GM12878 (cell line): ENCODE measurements at regions of chr4 and their contacts with region 1.

Region 1: DNA sequence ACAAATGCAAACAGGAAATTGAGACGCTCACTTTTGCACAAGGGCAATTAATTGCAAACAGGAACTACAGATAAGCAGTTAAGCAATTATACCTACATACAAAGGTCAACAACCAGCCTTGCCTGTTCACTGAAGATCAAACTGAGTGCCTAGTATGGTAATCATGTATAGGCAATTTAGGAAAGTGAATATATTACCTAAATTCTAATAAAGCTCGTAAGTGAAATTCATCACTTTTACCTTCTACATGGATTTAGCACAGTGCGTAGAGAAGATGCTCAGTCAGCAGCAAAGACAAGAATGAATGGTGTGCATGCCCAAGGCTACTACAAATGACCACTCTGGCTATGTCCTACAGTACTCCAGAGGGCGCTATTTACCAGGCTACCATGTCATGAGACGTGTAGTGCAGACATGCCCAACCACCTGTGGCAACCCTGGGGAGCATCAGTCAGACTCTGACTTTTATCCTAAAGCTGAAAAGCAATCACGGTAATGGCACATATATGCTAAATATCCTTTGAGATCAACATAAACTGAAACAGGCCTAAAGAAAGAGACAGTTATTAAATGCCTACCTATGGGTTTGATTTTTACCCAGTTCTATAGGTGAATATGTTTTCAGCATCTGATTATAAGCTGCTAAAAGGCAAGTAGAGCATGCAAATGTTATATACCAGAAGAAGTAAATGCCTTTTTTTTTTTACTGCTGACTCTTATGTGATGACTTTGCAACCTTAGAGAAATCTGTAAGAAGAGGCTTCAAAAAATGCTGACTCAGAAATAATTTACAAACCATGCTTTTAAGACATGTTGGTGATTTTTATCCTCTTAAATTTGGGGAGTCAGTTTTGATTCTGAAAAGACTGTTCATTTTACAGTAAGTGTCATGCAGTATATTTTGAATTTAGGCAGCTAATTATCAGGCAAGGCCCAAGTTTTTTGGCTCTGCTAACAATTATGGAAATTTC is 178.0 kb downstream of the PPP3CA start:
- DNase-seq: peak; percentile 47
- ATAC-seq: peak; percentile 100
- H3K4me3 ChIP-seq: no peak overlapping the region
- H3K27ac ChIP-seq: no peak overlapping the region
- H3K4me1 ChIP-seq: no peaks in the 10 kb centered on the region
- H3K27me3 ChIP-seq: no peaks in the 10 kb centered on the region
- CTCF ChIP-seq: peak; percentile 79 to 82 (median 81)
- EP300 ChIP-seq: no peak
- POLR2A ChIP-seq: no peak
- RAD21 ChIP-seq: peak; percentile 96

Region 2: DNA sequence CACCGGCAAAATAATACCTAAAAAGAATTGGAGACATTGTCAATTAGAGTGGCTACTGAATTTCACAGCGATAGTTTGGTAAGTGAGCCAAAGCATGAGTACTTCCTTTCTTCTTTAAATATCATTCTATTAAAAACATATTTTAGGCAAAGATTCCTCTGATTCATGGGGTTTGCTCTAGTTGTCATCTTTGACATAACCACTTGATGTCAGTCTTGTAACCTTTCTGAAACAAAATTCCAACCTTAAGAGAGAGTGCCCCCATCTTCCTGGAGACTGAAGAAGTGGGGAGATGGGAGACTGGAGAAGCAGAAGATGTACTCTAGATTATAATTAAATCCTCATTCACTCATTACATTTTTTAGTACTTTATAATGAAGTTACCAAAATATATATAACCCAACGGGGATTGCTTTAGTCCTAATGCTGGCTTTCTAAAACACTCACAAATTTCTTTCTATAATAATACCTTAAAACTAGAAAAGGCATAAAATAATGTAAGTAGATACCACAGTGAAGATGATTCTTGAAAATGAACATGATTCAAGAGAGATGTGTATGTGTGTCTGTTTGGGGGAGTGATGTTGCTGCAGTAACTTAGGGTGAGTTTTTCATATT is 747.9 kb before region 1 on chr4:
- CTCF ChIA-PET with region 1: no interaction called
- POLR2A ChIA-PET with region 1: no interaction called
- RAD21 ChIA-PET with region 1: no interaction called
- SMC1A ChIA-PET with region 1: no interaction called
- in situ Hi-C with region 1: no loop called
- intact Hi-C with region 1: loop called (anchors 10 kb)
- DNase-seq: no peak
- ATAC-seq: no peak
- H3K4me3 ChIP-seq: no peak overlapping the region
- H3K27ac ChIP-seq: no peak overlapping the region
- H3K4me1 ChIP-seq: no peaks in the 10 kb centered on the region
- H3K27me3 ChIP-seq: no peaks in the 10 kb centered on the region
- CTCF ChIP-seq: peak; percentile 19 to 45 (median 29); a peak in 4 of 6 replicates
- EP300 ChIP-seq: no peak
- POLR2A ChIP-seq: no peak
- RAD21 ChIP-seq: peak; percentile 70

Region 3: DNA sequence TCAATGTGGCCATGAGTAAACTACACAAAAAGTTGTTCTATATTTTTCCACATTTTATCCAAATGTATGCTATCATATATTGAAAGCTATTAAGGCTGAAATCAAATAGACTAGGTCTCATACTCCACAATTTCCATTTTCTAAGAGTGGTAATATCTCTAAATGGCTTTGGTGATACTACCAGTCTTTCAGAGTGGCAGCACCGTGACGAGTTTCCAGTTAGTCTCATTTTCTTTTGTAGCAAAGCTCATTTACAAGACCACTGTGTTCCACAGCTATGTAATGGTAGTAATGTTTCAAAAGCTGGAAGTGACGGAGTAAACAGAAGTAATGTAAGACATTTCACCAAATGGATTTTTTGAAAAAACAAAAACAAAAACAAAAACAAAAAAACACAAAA is 50.2 kb before region 1 on chr4:
- CTCF ChIA-PET with region 1: no interaction called
- POLR2A ChIA-PET with region 1: no interaction called
- RAD21 ChIA-PET with region 1: no interaction called
- SMC1A ChIA-PET with region 1: no interaction called
- in situ Hi-C with region 1: no loop called
- intact Hi-C with region 1: no loop called
- DNase-seq: no peak
- ATAC-seq: no peak
- H3K4me3 ChIP-seq: no peak overlapping the region
- H3K27ac ChIP-seq: no peak overlapping the region
- H3K4me1 ChIP-seq: no peaks in the 10 kb centered on the region
- H3K27me3 ChIP-seq: no peaks in the 10 kb centered on the region
- CTCF ChIP-seq: no peak
- EP300 ChIP-seq: no peak
- POLR2A ChIP-seq: no peak
- RAD21 ChIP-seq: no peak

Region 4: GRCh38 chr4:101155368-101155767 is 14.0 kb before region 1 on chr4:
- CTCF ChIA-PET with region 1: interaction called, 12 read pairs
- POLR2A ChIA-PET with region 1: no interaction called
- RAD21 ChIA-PET with region 1: interaction called, 4 read pairs
- SMC1A ChIA-PET with region 1: interaction called, 3 read pairs
- in situ Hi-C with region 1: no loop called
- intact Hi-C with region 1: no loop called
- DNase-seq: no peak
- ATAC-seq: no peak
- H3K4me3 ChIP-seq: no peak overlapping the region
- H3K27ac ChIP-seq: no peak overlapping the region
- H3K4me1 ChIP-seq: peaks cover 13% of the 10 kb centered on the region
- H3K27me3 ChIP-seq: no peaks in the 10 kb centered on the region
- CTCF ChIP-seq: no peak
- EP300 ChIP-seq: no peak
- POLR2A ChIP-seq: no peak
- RAD21 ChIP-seq: no peak

Region 5: DNA sequence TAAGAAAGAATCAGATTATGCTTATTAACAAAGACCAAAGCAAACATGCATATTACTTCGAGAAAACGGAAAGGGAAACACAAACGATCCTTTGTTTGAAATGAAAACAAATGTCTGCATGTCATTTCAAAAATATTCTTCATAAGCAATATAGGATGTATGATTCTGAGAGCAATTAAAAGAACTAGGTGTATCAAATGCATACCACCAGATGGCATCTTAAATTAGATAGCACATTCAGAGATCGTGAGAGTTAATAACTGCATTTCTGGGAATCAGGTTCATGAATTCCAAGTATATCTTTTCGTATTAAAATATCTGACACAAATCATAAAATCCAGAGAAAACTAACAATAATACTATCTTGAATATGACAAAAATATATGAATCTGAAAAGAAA is 18.5 kb after region 1 on chr4:
- CTCF ChIA-PET with region 1: interaction called, 5 read pairs
- POLR2A ChIA-PET with region 1: no interaction called
- RAD21 ChIA-PET with region 1: interaction called, 4 read pairs
- SMC1A ChIA-PET with region 1: interaction called, 12 read pairs
- in situ Hi-C with region 1: no loop called
- intact Hi-C with region 1: no loop called
- DNase-seq: no peak
- ATAC-seq: no peak
- H3K4me3 ChIP-seq: no peak overlapping the region
- H3K27ac ChIP-seq: no peak overlapping the region
- H3K4me1 ChIP-seq: no peaks in the 10 kb centered on the region
- H3K27me3 ChIP-seq: no peaks in the 10 kb centered on the region
- CTCF ChIP-seq: peak in 1 of 3 experiments; percentile 4; a peak in 1 of 6 replicates
- EP300 ChIP-seq: no peak
- POLR2A ChIP-seq: no peak
- RAD21 ChIP-seq: 0 out of 2 replicates have a peak, but pooled peaks have one; percentile 5

Region 6: DNA sequence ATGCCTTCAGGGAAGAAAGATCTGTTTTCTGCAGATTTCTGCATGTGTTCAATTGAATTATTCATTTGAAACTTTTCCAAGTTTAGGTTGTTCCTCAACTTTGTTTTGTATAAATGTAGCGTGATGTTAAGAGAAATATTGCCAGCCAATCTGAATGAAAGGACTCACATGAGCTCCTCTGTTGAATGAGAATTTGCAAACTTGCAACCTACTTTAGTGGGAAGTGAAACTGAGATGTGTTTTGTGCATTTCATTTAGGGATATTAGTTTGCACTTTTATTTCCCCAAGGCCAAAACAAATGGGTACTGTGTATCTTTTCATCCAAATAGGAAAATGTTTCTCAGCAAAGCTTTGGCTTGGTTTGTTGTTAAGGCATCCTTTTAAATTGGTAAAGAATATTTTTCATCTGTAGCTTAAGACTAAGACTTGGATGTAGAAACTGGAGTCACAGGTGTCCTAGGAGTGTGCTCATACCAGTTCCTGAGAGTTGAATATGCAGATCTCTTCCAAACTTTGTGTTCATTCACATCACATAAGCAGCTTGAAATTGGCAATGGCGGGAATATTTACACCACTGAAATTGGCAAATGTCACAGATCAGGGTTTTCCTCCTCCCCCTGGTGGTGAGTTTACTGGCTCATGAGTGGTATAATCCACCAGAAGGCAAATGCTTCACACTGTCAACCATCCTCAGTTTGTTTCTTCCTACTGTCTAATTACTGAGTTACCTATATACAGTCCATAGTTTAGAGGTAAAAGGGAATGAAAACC is 427.6 kb after region 1 on chr4:
- CTCF ChIA-PET with region 1: interaction called, 17 read pairs
- POLR2A ChIA-PET with region 1: no interaction called
- RAD21 ChIA-PET with region 1: interaction called, 4 read pairs
- SMC1A ChIA-PET with region 1: interaction called, 13 read pairs
- in situ Hi-C with region 1: no loop called
- intact Hi-C with region 1: loop called (anchors 1 kb)
- DNase-seq: peak; percentile 5
- ATAC-seq: peak; percentile 67
- H3K4me3 ChIP-seq: no peak overlapping the region
- H3K27ac ChIP-seq: no peak overlapping the region
- H3K4me1 ChIP-seq: no peaks in the 10 kb centered on the region
- H3K27me3 ChIP-seq: no peaks in the 10 kb centered on the region
- CTCF ChIP-seq: peak; percentile 41 to 43 (median 43); a peak in 5 of 6 replicates
- EP300 ChIP-seq: no peak
- POLR2A ChIP-seq: no peak
- RAD21 ChIP-seq: peak; percentile 30

Region 7: GRCh38 chr4:101730291-101731117 is 561.2 kb after region 1 on chr4:
- CTCF ChIA-PET with region 1: interaction called, 117 read pairs
- POLR2A ChIA-PET with region 1: no interaction called
- RAD21 ChIA-PET with region 1: interaction called, 52 read pairs
- SMC1A ChIA-PET with region 1: interaction called, 55 read pairs
- in situ Hi-C with region 1: loop called (anchors 5 kb)
- intact Hi-C with region 1: loop called (anchors 1 kb)
- DNase-seq: peak; percentile 8
- ATAC-seq: peak; percentile 95
- H3K4me3 ChIP-seq: no peak overlapping the region
- H3K27ac ChIP-seq: no peak overlapping the region
- H3K4me1 ChIP-seq: no peaks in the 10 kb centered on the region
- H3K27me3 ChIP-seq: no peaks in the 10 kb centered on the region
- CTCF ChIP-seq: peak; percentile 55 to 72 (median 62); a peak in 5 of 6 replicates
- EP300 ChIP-seq: no peak
- POLR2A ChIP-seq: no peak
- RAD21 ChIP-seq: peak; percentile 84

Region 8: GRCh38 chr4:102263011-102263787 is 1093.9 kb after region 1 on chr4:
- CTCF ChIA-PET with region 1: no interaction called
- POLR2A ChIA-PET with region 1: no interaction called
- RAD21 ChIA-PET with region 1: no interaction called
- SMC1A ChIA-PET with region 1: interaction called, 3 read pairs
- in situ Hi-C with region 1: no loop called
- intact Hi-C with region 1: loop called (anchors 5 kb)
- DNase-seq: no peak
- ATAC-seq: peak; percentile 94
- H3K4me3 ChIP-seq: no peak overlapping the region
- H3K27ac ChIP-seq: no peak overlapping the region
- H3K4me1 ChIP-seq: no peaks in the 10 kb centered on the region
- H3K27me3 ChIP-seq: no peaks in the 10 kb centered on the region
- CTCF ChIP-seq: peak; percentile 32 to 55 (median 40); a peak in 5 of 6 replicates
- EP300 ChIP-seq: no peak
- POLR2A ChIP-seq: no peak
- RAD21 ChIP-seq: peak; percentile 61